ENCODE measurements at regions of chr12 and their contacts with region 1.

Region 1: DNA sequence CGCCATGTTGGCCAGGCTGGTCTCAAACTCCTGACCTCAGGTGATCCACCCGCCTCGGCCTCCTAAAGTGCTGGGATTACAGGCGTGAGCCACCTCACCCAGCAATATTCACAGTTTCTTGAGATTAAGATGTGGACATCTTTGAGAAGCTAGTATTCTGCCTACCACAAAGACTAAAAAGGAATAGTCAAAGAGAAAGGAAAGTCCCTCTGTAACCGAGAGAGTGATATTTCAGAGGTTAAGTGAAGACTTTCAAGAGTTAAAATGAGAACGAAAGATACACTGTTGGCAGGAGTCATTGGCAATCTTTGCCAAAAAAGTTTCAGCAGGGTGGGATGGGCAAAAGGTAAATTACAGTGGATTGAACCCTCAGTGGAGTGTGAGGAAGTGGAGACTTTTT is 15.6 kb downstream of the DGKA start:
- DNase-seq: no peak
- ATAC-seq: no peak
- H3K4me3 ChIP-seq: no peak overlapping the region
- H3K4me3 Mint-ChIP-seq: no peak overlapping the region
- H3K27ac ChIP-seq: no peak overlapping the region
- H3K27ac Mint-ChIP-seq: peak overlapping the region; percentile 84
- H3K4me1 ChIP-seq: no peaks in the 10 kb centered on the region
- H3K4me1 Mint-ChIP-seq: peaks cover 50% of the 10 kb centered on the region
- H3K27me3 ChIP-seq: no peaks in the 10 kb centered on the region
- H3K27me3 Mint-ChIP-seq: no peaks in the 10 kb centered on the region
- CTCF ChIP-seq: no peak

Region 2: GRCh38 chr12:55931780-55932550 is 14.6 kb before region 1 on chr12:
- CTCF ChIA-PET with region 1: interaction called, 178 read pairs
- POLR2A ChIA-PET with region 1: interaction called, 21 read pairs
- intact Hi-C with region 1: no loop called
- DNase-seq: peak in 7 of 9 experiments; percentile 18 to 69 (median 46)
- ATAC-seq: no peak
- H3K4me3 ChIP-seq: peak overlapping the region; percentile 82 to 91
- H3K4me3 Mint-ChIP-seq: peak overlapping the region; percentile 99
- H3K27ac ChIP-seq: peak overlapping the region; percentile 65 to 90
- H3K27ac Mint-ChIP-seq: peak overlapping the region; percentile 95
- H3K4me1 ChIP-seq: peaks cover 60% of the 10 kb centered on the region
- H3K4me1 Mint-ChIP-seq: peaks cover 63% of the 10 kb centered on the region
- H3K27me3 ChIP-seq: no peaks in the 10 kb centered on the region
- H3K27me3 Mint-ChIP-seq: no peaks in the 10 kb centered on the region
- CTCF ChIP-seq: no peak

Measured in CD8-positive, alpha-beta T cell (primary cell).